Activated naive CD4-positive, alpha-beta T cell treated with anti-CD3 and anti-CD28 coated beads for 36 hours (primary cell): ENCODE measurements at regions of chr22 and their contacts with region 1.

Region 1: DNA sequence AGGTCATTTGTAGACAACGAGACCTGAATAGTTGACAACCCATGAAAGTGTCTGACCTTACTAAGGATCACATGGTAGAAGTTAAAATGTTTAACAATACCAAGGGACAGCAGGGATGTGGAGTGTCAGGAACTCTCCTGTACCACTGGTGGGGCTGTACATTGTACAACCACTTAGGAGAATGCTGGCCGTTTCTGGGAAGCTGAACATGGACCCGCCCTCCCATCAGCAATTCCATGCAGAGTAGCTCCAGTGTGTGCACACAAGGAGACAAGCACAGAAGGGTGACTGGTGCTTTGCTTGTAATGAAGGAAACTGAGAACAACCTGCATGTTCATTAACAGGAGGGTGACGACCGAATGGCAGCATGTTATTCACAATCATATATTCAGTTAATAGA is 163.0 kb downstream of the MPPED1 start:
- DNase-seq: no peak
- H3K4me3 Mint-ChIP-seq: no peak overlapping the region
- H3K27ac Mint-ChIP-seq: no peak overlapping the region
- H3K4me1 Mint-ChIP-seq: no peaks in the 10 kb centered on the region
- H3K27me3 Mint-ChIP-seq: peaks cover 2% of the 10 kb centered on the region

Region 2: GRCh38 chr22:43587565-43587964 is 12.8 kb after region 1 on chr22:
- CTCF ChIA-PET with region 1: no interaction called
- intact Hi-C with region 1: loop called (anchors 1 kb)
- DNase-seq: no peak
- H3K4me3 Mint-ChIP-seq: no peak overlapping the region
- H3K27ac Mint-ChIP-seq: no peak overlapping the region
- H3K4me1 Mint-ChIP-seq: no peaks in the 10 kb centered on the region
- H3K27me3 Mint-ChIP-seq: peaks cover 25% of the 10 kb centered on the region

Region 3: GRCh38 chr22:43750791-43751190 is 176.0 kb after region 1 on chr22:
- CTCF ChIA-PET with region 1: no interaction called
- intact Hi-C with region 1: no loop called
- DNase-seq: no peak
- H3K4me3 Mint-ChIP-seq: no peak overlapping the region
- H3K27ac Mint-ChIP-seq: no peak overlapping the region
- H3K4me1 Mint-ChIP-seq: no peaks in the 10 kb centered on the region
- H3K27me3 Mint-ChIP-seq: peaks cover 5% of the 10 kb centered on the region